ENCODE measurements at regions of chr1 and their contacts with region 1.

Region 1: GRCh38 chr1:203273206-203273868 is 32.0 kb upstream of the BTG2 start:
- DNase-seq: peak; percentile 73 to 98 (median 90)

Region 2: DNA sequence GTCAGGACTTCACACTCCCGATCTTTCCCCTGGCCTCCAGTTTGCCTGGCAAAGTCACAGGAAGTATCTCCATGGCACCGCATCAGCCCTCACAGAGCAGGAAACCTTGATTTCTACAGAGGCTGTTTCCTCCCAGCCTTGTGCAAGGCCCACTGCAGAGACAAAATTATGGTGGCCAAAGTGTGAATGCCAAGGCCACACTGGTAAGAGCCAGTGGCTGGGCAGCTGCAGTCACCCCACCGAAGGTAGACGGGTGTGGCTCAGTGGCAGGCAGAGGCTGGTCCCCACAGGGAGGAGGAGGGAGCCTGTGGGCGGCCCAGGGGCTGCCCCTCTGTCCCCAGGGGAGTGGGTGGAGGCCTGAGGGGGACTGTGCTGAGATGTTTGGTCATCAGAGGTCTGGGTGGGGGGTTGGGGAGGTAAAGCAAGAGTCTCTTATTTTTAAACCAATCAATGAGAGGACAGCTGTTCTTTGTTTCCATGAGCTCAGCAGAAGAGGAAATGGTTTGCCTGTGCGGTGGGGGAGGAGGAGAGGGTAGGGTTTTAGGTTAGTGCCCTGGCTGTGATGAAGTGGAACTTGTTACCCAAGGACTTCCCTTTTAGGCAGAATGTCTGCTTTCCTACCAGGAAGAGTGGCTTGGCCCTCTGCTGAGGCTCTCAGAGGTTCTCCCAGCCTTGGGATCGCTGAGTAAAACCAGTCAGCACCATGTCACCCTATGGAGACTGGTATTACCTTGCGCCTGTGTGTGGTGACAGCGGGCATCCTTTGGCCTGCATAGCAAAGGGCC is 14.0 kb after region 1 on chr1:
- intact Hi-C with region 1: loop called (anchors 2 kb)
- DNase-seq: peak in 1 of 10 donors; percentile 82

Region 3: GRCh38 chr1:203306089-203306966 is 33.0 kb after region 1 on chr1:
- intact Hi-C with region 1: loop called (anchors 2 kb)
- DNase-seq: peak in 9 of 10 donors; percentile 46 to 94 (median 70)

Region 4: GRCh38 chr1:203326830-203327683 is 53.7 kb after region 1 on chr1:
- intact Hi-C with region 1: loop called (anchors 2 kb)
- DNase-seq: peak; percentile 87 to 99 (median 94)

Region 5: DNA sequence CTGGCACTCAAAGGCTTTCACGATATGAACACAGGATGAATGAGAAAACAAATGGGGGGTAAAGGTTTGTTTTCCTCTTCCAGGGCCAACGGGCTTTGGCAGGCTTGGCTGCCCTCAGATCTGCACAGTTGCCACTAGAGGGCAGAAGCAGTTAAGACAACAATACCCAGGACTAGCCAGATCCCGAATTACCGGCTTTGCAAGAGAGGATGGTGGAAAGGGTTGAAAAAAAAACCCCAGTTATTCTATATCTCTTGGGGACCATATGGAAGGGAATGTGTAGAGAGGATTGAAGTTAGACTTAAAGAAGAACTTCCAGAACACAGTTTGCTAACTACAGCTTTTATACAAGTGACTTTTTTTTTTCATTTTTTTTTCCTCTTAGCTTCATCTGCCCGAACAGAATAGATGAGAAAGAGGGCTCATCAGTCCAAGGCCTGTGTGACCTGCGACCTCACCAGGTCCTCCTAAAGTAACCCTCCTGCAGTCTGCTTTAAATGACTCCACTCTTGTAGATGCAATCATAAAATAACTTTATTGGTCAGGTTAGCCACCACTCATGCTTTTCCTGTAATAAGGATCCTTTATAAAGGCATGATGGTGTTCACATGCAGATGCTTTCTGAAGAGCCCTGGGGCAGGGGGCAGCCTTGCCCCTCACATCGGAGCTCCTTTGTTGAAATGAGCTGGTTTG is 66.9 kb after region 1 on chr1:
- intact Hi-C with region 1: loop called (anchors 1 kb)
- DNase-seq: peak; percentile 39 to 95 (median 72)

Region 6: DNA sequence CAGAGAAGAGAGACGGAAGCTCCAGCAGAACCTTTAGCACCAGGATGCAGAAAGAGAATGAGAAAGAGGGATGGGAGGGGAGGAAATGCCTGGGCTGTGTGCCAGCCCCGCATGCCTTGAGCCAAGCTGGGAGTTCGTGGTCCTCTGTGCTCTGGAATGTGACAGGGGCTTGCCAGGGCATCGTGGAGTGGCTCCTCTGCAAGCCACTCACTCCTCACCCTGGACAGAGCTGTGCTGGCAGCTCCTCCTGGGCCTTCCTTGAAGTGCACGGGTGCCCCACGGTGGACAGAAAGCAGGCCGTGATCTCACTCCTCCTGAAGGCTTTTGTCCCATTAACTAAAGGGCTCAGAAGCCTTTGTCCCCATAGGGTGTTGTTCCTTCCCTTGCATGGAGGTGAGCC is 167.4 kb after region 1 on chr1:
- intact Hi-C with region 1: loop called (anchors 5 kb)
- DNase-seq: peak; percentile 43 to 96 (median 74)

Region 7: GRCh38 chr1:203486618-203487370 is 213.5 kb after region 1 on chr1:
- intact Hi-C with region 1: loop called (anchors 5 kb)
- DNase-seq: peak in 1 of 10 donors; percentile 54